ENCODE measurements at regions of chr6 and their contacts with region 1.

Region 1: DNA sequence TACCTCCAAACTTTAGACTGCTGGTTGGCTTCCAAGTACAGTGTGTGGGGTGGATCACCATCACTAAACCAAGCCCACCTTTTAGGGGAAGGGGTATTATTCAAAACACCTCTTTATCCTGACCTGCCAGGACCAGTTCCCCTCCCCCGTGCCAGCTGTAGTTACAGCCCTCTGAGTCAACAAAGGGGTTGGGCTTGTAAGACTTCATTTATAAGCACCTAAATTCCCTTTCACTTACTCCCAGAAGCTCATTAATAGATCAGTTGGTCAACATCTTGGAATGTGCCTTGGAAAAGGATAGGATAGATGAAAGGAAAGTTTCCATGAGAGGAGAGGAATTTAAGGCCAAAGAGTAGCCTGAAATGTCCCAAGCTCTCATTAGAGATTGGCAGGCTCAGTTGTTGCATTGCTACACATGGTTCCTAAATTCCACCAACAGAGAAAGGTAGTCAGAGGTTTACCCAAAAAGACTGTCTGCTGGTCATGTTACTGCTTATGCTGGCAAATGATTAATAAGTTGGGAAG is 59.2 kb downstream of the TNFAIP3 start:
- DNase-seq: peak; percentile 33 to 57 (median 48)
- ATAC-seq: peak; percentile 68
- H3K4me3 ChIP-seq: no peak overlapping the region
- H3K27ac ChIP-seq: no peak overlapping the region
- H3K4me1 ChIP-seq: peaks cover 4 to 32% of the 10 kb centered on the region in 2 experiments; a peak in 4 of 5 replicates
- H3K27me3 ChIP-seq: no peaks in the 10 kb centered on the region
- CTCF ChIP-seq: no peak
- EP300 ChIP-seq: peak; percentile 40; the same call in 1 of the 2 replicates
- POLR2A ChIP-seq: no peak
- RAD21 ChIP-seq: no peak

Region 2: DNA sequence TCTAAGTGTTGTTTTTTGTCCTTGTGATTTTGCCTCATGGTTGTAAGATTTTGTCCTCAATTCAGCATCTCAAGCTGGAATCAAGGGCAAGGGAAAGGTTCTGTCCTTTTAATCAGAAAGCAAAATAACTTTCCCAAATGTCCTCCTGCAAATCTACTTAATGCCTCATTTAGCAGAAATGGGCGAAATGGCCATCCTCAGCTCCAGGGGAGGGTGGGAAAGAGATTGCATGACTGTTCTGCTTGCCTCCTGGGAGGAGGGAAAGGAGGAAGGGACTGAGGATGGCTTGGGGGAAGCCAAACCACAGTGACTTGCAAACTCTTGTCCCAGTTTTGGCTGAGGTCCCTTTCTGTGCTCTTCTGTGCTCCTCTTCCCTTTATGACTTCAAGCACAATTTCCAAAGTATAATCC is 15.8 kb before region 1 on chr6:
- CTCF ChIA-PET with region 1: interaction called, 3 read pairs
- POLR2A ChIA-PET with region 1: interaction called, 14 read pairs
- in situ Hi-C with region 1: no loop called
- intact Hi-C with region 1: no loop called
- DNase-seq: peak; percentile 59 to 95 (median 72)
- ATAC-seq: peak; percentile 84
- H3K4me3 ChIP-seq: no peak overlapping the region
- H3K27ac ChIP-seq: peak overlapping the region; percentile 71
- H3K4me1 ChIP-seq: peaks cover 16 to 71% of the 10 kb centered on the region in 2 experiments
- H3K27me3 ChIP-seq: no peaks in the 10 kb centered on the region
- CTCF ChIP-seq: no peak
- EP300 ChIP-seq: peak; percentile 87
- POLR2A ChIP-seq: no peak
- RAD21 ChIP-seq: peak in 1 of 2 experiments; percentile 19; a peak in 3 of 4 replicates